Activated CD8-positive, alpha-beta memory T cell treated with anti-CD3 and anti-CD28 coated beads, Interleukin-2, amount 10 ng/mL, durations not matched to agents 7 days and 5 days (primary cell): ENCODE measurements at regions of chr11 and their contacts with region 1.

Region 1: DNA sequence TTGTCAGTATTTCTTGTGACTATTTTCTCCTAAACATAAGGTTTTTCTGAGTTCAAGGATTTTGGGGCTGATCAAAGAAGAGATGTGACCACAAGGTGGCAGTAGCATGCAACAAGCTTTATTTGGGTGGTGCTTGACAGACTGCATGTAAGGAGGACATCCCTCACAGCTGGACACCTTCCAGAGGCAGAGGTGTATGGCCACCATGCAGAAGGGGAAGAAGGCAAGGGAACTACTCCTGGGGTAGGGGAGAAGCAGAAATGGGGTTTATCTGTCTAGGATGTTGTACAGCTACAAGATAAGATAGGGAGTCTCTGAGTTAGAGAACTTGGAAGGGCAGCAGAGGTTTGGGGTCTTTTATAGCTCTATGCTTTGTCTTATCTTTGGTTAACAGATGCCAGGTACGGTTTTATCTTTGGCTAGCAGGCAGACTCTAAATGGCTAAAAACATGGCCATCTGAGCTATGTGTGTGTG is 5.1 kb upstream of the BIRC2 start:
- DNase-seq: peak; percentile 82
- ATAC-seq: peak; percentile 73
- H3K4me3 Mint-ChIP-seq: no peak overlapping the region
- H3K27ac Mint-ChIP-seq: no peak overlapping the region
- H3K4me1 Mint-ChIP-seq: peaks cover 24% of the 10 kb centered on the region
- H3K27me3 Mint-ChIP-seq: no peaks in the 10 kb centered on the region

Region 2: DNA sequence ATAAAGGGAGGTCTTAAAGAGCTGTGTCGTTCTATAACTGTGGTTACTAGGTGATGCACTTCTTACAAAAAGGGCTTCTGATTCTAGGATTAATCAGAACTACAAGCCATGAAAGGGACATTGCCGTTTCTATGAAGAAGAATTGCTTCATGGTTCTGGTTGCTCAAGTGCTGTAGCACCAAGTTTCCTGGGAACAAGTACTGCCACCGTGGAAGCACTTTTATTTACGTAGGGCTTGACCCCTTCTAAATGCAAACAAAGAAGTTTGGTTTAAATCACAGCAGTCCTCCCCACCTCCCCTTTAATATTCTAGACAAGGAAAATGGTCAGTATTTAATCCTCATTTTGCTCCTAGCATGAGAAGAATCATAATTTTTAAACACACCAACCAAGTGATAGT is 221.9 kb before region 1 on chr11:
- CTCF ChIA-PET with region 1: no interaction called
- DNase-seq: no peak
- ATAC-seq: no peak
- H3K4me3 Mint-ChIP-seq: no peak overlapping the region
- H3K27ac Mint-ChIP-seq: no peak overlapping the region
- H3K4me1 Mint-ChIP-seq: peaks cover 2% of the 10 kb centered on the region
- H3K27me3 Mint-ChIP-seq: peaks cover 32% of the 10 kb centered on the region

Region 3: GRCh38 chr11:102279641-102280170 is 62.2 kb before region 1 on chr11:
- CTCF ChIA-PET with region 1: interaction called, 12 read pairs
- DNase-seq: no peak
- ATAC-seq: no peak
- H3K4me3 Mint-ChIP-seq: no peak overlapping the region
- H3K27ac Mint-ChIP-seq: no peak overlapping the region
- H3K4me1 Mint-ChIP-seq: peaks cover 6% of the 10 kb centered on the region
- H3K27me3 Mint-ChIP-seq: peaks cover 21% of the 10 kb centered on the region

Region 4: GRCh38 chr11:102293873-102294601 is 47.8 kb before region 1 on chr11:
- CTCF ChIA-PET with region 1: interaction called, 110 read pairs
- DNase-seq: no peak
- ATAC-seq: peak; percentile 98
- H3K4me3 Mint-ChIP-seq: peak overlapping the region; percentile 88
- H3K27ac Mint-ChIP-seq: peak overlapping the region; percentile 97
- H3K4me1 Mint-ChIP-seq: peaks cover 34% of the 10 kb centered on the region
- H3K27me3 Mint-ChIP-seq: no peaks in the 10 kb centered on the region

Region 5: GRCh38 chr11:102361086-102362031 is 19.5 kb after region 1 on chr11:
- CTCF ChIA-PET with region 1: interaction called, 20 read pairs
- DNase-seq: peak; percentile 69
- ATAC-seq: peak; percentile 84
- H3K4me3 Mint-ChIP-seq: peak overlapping the region; percentile 1
- H3K27ac Mint-ChIP-seq: peak overlapping the region; percentile 68
- H3K4me1 Mint-ChIP-seq: peaks cover 40% of the 10 kb centered on the region
- H3K27me3 Mint-ChIP-seq: no peaks in the 10 kb centered on the region

Region 6: GRCh38 chr11:102375720-102376399 is 34.0 kb after region 1 on chr11:
- CTCF ChIA-PET with region 1: no interaction called
- DNase-seq: no peak
- ATAC-seq: no peak
- H3K4me3 Mint-ChIP-seq: no peak overlapping the region
- H3K27ac Mint-ChIP-seq: peak overlapping the region; percentile 29
- H3K4me1 Mint-ChIP-seq: peaks cover 7% of the 10 kb centered on the region
- H3K27me3 Mint-ChIP-seq: no peaks in the 10 kb centered on the region

Region 7: GRCh38 chr11:102390667-102391465 is 49.0 kb after region 1 on chr11:
- CTCF ChIA-PET with region 1: interaction called, 25 read pairs
- DNase-seq: peak; percentile 73
- ATAC-seq: peak; percentile 83
- H3K4me3 Mint-ChIP-seq: no peak overlapping the region
- H3K27ac Mint-ChIP-seq: peak overlapping the region; percentile 48
- H3K4me1 Mint-ChIP-seq: peaks cover 16% of the 10 kb centered on the region
- H3K27me3 Mint-ChIP-seq: no peaks in the 10 kb centered on the region

Region 8: GRCh38 chr11:102614485-102614884 is 272.6 kb after region 1 on chr11:
- CTCF ChIA-PET with region 1: interaction called, 45 read pairs
- DNase-seq: no peak
- ATAC-seq: no peak
- H3K4me3 Mint-ChIP-seq: no peak overlapping the region
- H3K27ac Mint-ChIP-seq: no peak overlapping the region
- H3K4me1 Mint-ChIP-seq: peaks cover 11% of the 10 kb centered on the region
- H3K27me3 Mint-ChIP-seq: no peaks in the 10 kb centered on the region

Region 9: GRCh38 chr11:102637731-102638130 is 295.9 kb after region 1 on chr11:
- CTCF ChIA-PET with region 1: no interaction called
- DNase-seq: no peak
- ATAC-seq: no peak
- H3K4me3 Mint-ChIP-seq: no peak overlapping the region
- H3K27ac Mint-ChIP-seq: no peak overlapping the region
- H3K4me1 Mint-ChIP-seq: no peaks in the 10 kb centered on the region
- H3K27me3 Mint-ChIP-seq: peaks cover 5% of the 10 kb centered on the region